ENCODE measurements at regions of chrX and their contacts with region 1.

Region 1: GRCh38 chrX:47193475-47194193 is at the start of gene UBA1:
- DNase-seq: peak; percentile 97
- H3K4me3 ChIP-seq: peak within 1 kb of the TSS; percentile 72 to 95 (median 80)
- H3K27ac ChIP-seq: peak within 1 kb of the TSS; percentile 92 to 97 (median 96)
- H3K4me1 ChIP-seq: peaks cover 50 to 71% (median 57%) of the 10 kb centered on the region in 4 donors
- H3K27me3 ChIP-seq: no peaks in the 10 kb centered on the region
- CTCF ChIP-seq: peak; percentile 59 to 95 (median 93)
- EP300 ChIP-seq: no peak
- POLR2A ChIP-seq: peak; percentile 45
- total RNA-seq, gene UBA1: 125 to 218 (median 147) TPM

Region 2: DNA sequence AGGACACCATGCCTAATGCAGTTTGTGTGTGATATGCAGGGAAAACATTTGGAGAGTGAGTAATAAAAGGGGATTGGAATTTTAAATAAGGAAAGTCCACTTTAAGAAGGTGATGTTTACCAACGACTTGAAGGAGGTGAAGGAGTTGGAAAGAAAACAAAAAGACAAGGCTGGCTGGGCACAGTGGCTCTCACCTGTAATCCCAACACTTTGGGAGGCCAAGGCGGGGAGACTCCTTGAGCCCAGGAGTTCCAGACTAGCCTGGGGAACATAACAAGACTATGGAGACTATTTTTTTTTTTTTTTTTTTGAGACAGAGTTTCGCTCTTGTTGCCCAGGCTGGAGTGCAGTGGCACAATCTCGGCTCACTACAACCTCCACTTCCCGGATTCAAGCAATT is 60.1 kb before region 1 on chrX:
- intact Hi-C with region 1: no loop called
- DNase-seq: no peak
- H3K4me3 ChIP-seq: no peak overlapping the region
- H3K27ac ChIP-seq: no peak overlapping the region
- H3K4me1 ChIP-seq: peaks cover 2 to 13% (median 8%) of the 10 kb centered on the region in 4 donors
- H3K27me3 ChIP-seq: no peaks in the 10 kb centered on the region
- CTCF ChIP-seq: no peak
- EP300 ChIP-seq: no peak
- POLR2A ChIP-seq: no peak

Region 3: GRCh38 chrX:47158131-47158530 is 35.5 kb before region 1 on chrX:
- intact Hi-C with region 1: no loop called
- DNase-seq: no peak
- H3K4me3 ChIP-seq: no peak overlapping the region
- H3K27ac ChIP-seq: no peak overlapping the region
- H3K4me1 ChIP-seq: no peaks in the 10 kb centered on the region
- H3K27me3 ChIP-seq: peaks cover 0 to 4% (median 0%) of the 10 kb centered on the region in 4 donors
- CTCF ChIP-seq: no peak
- EP300 ChIP-seq: no peak
- POLR2A ChIP-seq: no peak

Region 4: GRCh38 chrX:47384502-47384901 is 190.9 kb after region 1 on chrX:
- intact Hi-C with region 1: loop called (anchors 2 kb)
- DNase-seq: no peak
- H3K4me3 ChIP-seq: no peak overlapping the region
- H3K27ac ChIP-seq: no peak overlapping the region
- H3K4me1 ChIP-seq: no peaks in the 10 kb centered on the region
- H3K27me3 ChIP-seq: no peaks in the 10 kb centered on the region
- CTCF ChIP-seq: peak; percentile 64 to 77 (median 65)
- EP300 ChIP-seq: no peak
- POLR2A ChIP-seq: no peak

Region 5: GRCh38 chrX:47502316-47503184 is 308.9 kb after region 1 on chrX:
- intact Hi-C with region 1: no loop called
- DNase-seq: no peak
- H3K4me3 ChIP-seq: no peak overlapping the region
- H3K27ac ChIP-seq: peak overlapping the region in 1 of 4 donors; percentile 6
- H3K4me1 ChIP-seq: peaks cover 0 to 4% (median 0%) of the 10 kb centered on the region in 4 donors
- H3K27me3 ChIP-seq: no peaks in the 10 kb centered on the region
- CTCF ChIP-seq: no peak
- EP300 ChIP-seq: no peak
- POLR2A ChIP-seq: no peak

Measured in esophagus muscularis mucosa (tissue), 4 donors.